ENCODE measurements at regions of chrX and their contacts with region 1.

Region 1: GRCh38 chrX:2875798-2876399 is 47.2 kb downstream of the GYG2 start:
- DNase-seq: no peak
- H3K4me3 ChIP-seq: no peak overlapping the region
- H3K27ac ChIP-seq: no peak overlapping the region
- H3K27me3 ChIP-seq: no peaks in the 10 kb centered on the region
- CTCF ChIP-seq: peak; percentile 45

Region 2: GRCh38 chrX:2863629-2864028 is 12.3 kb before region 1 on chrX:
- CTCF ChIA-PET with region 1: interaction called, 12 read pairs
- POLR2A ChIA-PET with region 1: no interaction called
- DNase-seq: no peak
- H3K4me3 ChIP-seq: no peak overlapping the region
- H3K27ac ChIP-seq: no peak overlapping the region
- H3K27me3 ChIP-seq: no peaks in the 10 kb centered on the region
- CTCF ChIP-seq: no peak